ENCODE measurements at regions of chr2 and their contacts with region 1.

Region 1: DNA sequence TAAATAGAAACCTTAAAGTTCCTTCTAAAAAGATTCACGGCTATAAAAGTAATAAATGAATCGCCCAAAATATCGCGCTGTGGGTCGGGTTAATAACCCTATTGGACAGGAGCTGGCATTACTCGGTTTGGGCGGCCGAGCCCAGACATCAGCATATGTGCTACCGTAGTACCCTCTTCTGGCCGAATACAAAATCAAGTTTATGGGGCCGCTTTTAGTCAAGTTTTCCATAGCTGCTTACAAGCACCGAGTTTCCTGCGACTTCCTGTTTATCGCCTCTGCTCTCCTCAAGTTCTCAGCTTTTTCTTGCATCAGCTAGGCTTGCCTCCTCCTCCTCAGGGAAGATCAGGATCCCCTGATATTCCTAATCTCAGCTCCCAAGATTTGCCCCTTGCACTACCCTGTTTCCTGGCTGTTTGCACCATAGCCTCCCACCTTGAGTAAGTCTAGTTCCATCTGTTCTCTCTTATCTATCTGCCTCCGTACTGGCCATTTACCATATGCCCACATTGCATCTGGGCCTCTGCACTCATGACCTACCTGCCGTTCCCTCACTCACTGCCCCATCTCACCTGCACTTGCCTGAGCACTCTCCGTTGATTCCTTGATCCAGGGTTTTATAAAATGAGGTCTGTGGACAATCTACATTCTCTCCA is 56.1 kb downstream of the SLC35F5 start:
- DNase-seq: peak; percentile 72
- ATAC-seq: peak; percentile 78
- H3K4me3 Mint-ChIP-seq: peak overlapping the region; percentile 39
- H3K27ac Mint-ChIP-seq: peak overlapping the region; percentile 87
- H3K4me1 Mint-ChIP-seq: peaks cover 29% of the 10 kb centered on the region
- H3K27me3 Mint-ChIP-seq: no peaks in the 10 kb centered on the region

Region 2: GRCh38 chr2:113382476-113382875 is 317.8 kb before region 1 on chr2:
- CTCF ChIA-PET with region 1: no interaction called
- POLR2A ChIA-PET with region 1: no interaction called
- intact Hi-C with region 1: no loop called
- DNase-seq: no peak
- ATAC-seq: no peak
- H3K4me3 Mint-ChIP-seq: no peak overlapping the region
- H3K27ac Mint-ChIP-seq: no peak overlapping the region
- H3K4me1 Mint-ChIP-seq: peaks cover under 1% of the 10 kb centered on the region
- H3K27me3 Mint-ChIP-seq: peaks cover 3% of the 10 kb centered on the region

Region 3: GRCh38 chr2:113602869-113603466 is 97.3 kb before region 1 on chr2:
- CTCF ChIA-PET with region 1: interaction called, 10 read pairs
- POLR2A ChIA-PET with region 1: no interaction called
- intact Hi-C with region 1: loop called (anchors 1 to 10 kb)
- DNase-seq: peak; percentile 6
- ATAC-seq: peak; percentile 47
- H3K4me3 Mint-ChIP-seq: peak overlapping the region; percentile 82
- H3K27ac Mint-ChIP-seq: peak overlapping the region; percentile 90
- H3K4me1 Mint-ChIP-seq: peaks cover 7% of the 10 kb centered on the region
- H3K27me3 Mint-ChIP-seq: no peaks in the 10 kb centered on the region